ENCODE measurements at regions of chr17 and their contacts with region 1.

Region 1: GRCh38 chr17:35692512-35693210 is 38.8 kb upstream of the RASL10B start:
- DNase-seq: no peak
- H3K4me3 ChIP-seq: no peak overlapping the region
- H3K27ac ChIP-seq: no peak overlapping the region
- H3K4me1 ChIP-seq: no peaks in the 10 kb centered on the region
- H3K27me3 ChIP-seq: no peaks in the 10 kb centered on the region
- CTCF ChIP-seq: no peak

Region 2: DNA sequence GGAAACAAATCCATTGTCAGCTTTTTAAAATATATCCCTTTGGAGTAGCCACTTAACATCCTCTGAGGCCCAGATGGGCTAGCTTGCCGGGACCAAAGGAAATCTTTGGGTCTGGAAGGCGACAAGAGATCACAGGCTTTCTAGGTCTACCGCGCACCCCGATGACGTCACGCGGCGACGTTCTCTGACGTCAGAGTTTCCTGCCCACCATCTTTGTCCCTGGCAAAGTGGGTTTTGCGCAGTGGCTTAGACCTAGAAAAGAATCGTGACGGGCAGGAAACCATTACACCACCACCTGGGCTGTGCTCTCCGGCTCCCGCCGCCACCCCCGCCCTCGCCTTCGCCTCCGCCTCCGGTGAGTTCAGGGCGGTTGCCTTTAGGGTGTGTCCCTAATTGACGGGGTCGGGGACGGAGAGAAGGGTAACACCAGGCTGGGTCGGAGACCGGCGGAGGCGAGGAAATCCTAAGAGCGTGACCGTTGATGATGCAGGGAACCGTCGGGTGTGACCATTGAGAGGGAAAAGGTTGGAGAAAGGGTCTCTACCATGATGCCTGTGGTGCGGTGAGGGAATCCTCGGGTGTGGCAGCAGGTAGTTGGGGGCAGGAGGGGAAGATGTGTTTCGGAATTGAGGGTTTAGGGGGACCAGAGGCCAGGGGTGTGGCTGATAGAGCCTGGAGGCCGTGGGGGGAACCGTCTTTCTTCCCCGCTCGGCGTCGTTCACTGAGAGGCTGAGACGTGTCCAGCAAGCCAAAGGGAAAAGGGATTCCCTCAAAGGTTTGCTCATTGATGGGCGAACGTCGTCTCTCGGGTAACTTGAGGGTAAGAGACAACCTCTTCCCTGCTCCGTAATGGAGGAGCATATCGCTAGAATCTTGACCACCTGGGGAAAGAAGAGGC is 105.3 kb before region 1 on chr17 and contains the start of gene AP2B1:
- CTCF ChIA-PET with region 1: no interaction called
- POLR2A ChIA-PET with region 1: no interaction called
- intact Hi-C with region 1: no loop called
- DNase-seq: peak; percentile 82 to 90
- H3K4me3 ChIP-seq: peak within 1 kb of the TSS; percentile 97
- H3K27ac ChIP-seq: peak within 1 kb of the TSS; percentile 92
- H3K4me1 ChIP-seq: peaks cover 16% of the 10 kb centered on the region
- H3K27me3 ChIP-seq: no peaks in the 10 kb centered on the region
- CTCF ChIP-seq: no peak
- total RNA-seq, gene AP2B1: 153 and 186 TPM in 2 replicates

Region 3: DNA sequence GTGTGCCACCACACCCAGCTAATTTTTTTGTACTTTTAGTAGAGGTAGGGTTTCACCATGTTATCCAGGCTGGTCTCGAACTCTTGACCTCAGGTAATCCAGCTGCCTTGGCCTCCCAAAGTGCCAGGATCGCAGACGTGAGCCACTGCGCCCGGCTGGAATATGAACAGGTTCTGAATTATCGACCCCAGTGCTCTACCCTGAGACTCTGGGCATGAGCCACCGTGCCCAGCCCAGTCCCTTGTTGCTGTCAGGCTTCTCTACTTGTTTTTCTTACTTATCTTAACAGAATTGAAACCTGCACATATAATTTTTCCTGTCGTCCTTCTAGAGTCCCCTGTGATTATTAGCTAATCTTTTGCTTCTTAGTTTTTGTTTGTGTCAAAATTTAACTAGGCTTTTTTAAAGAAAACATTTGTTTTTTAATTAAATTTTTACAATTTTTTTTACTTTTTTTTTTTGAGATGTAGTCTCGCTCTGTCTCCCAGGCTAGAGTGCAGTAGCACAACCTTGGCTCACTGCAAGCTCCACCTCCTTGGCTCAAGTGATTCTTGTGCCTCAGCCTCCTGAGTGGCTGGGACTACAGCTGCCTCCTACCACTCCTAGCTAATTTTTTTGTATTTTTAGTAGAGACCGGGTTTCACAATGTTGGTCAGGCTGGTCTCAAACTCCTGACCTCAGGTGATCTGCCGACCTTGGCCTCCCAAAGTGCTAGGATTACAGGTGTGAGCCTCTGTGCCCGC is 38.9 kb before region 1 on chr17:
- CTCF ChIA-PET with region 1: no interaction called
- POLR2A ChIA-PET with region 1: no interaction called
- intact Hi-C with region 1: loop called (anchors 5 kb)
- DNase-seq: no peak
- H3K4me3 ChIP-seq: no peak overlapping the region
- H3K27ac ChIP-seq: no peak overlapping the region
- H3K4me1 ChIP-seq: no peaks in the 10 kb centered on the region
- H3K27me3 ChIP-seq: no peaks in the 10 kb centered on the region
- CTCF ChIP-seq: no peak

Region 4: GRCh38 chr17:35676441-35676840 is 16.2 kb before region 1 on chr17:
- CTCF ChIA-PET with region 1: no interaction called
- POLR2A ChIA-PET with region 1: no interaction called
- intact Hi-C with region 1: no loop called
- DNase-seq: no peak
- H3K4me3 ChIP-seq: no peak overlapping the region
- H3K27ac ChIP-seq: no peak overlapping the region
- H3K4me1 ChIP-seq: no peaks in the 10 kb centered on the region
- H3K27me3 ChIP-seq: no peaks in the 10 kb centered on the region
- CTCF ChIP-seq: no peak

Region 5: GRCh38 chr17:35743626-35744328 is 51.1 kb after region 1 on chr17:
- CTCF ChIA-PET with region 1: no interaction called
- POLR2A ChIA-PET with region 1: no interaction called
- intact Hi-C with region 1: no loop called
- DNase-seq: peak; percentile 26 to 48
- H3K4me3 ChIP-seq: no peak overlapping the region
- H3K27ac ChIP-seq: no peak overlapping the region
- H3K4me1 ChIP-seq: no peaks in the 10 kb centered on the region
- H3K27me3 ChIP-seq: peaks cover 82% of the 10 kb centered on the region
- CTCF ChIP-seq: no peak

Region 6: DNA sequence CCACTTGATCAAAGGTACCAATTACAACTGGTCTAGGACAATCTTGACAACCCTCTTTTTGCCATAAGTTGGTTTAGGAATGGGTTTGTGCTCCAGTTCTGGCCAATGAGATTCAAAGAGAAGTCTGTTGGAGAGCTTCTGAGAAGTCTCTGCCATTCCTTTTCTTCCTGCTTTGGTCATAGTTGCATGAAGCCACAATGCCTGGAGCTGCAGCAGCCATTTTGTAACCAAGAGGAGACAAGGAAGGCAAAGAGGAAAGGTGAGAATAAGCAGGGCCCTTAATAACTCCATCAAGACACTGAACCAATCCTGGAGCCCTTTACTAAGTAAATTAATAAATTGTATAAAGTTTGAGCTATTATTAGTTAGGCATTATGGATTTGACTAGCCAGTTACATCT is 64.6 kb after region 1 on chr17:
- CTCF ChIA-PET with region 1: no interaction called
- POLR2A ChIA-PET with region 1: no interaction called
- intact Hi-C with region 1: no loop called
- DNase-seq: no peak
- H3K4me3 ChIP-seq: no peak overlapping the region
- H3K27ac ChIP-seq: no peak overlapping the region
- H3K4me1 ChIP-seq: no peaks in the 10 kb centered on the region
- H3K27me3 ChIP-seq: 0 out of 2 replicates have a peak, but pooled peaks cover 17% of the 10 kb centered on the region
- CTCF ChIP-seq: no peak